ENCODE measurements at regions of chr7 and their contacts with region 1.

Region 1: DNA sequence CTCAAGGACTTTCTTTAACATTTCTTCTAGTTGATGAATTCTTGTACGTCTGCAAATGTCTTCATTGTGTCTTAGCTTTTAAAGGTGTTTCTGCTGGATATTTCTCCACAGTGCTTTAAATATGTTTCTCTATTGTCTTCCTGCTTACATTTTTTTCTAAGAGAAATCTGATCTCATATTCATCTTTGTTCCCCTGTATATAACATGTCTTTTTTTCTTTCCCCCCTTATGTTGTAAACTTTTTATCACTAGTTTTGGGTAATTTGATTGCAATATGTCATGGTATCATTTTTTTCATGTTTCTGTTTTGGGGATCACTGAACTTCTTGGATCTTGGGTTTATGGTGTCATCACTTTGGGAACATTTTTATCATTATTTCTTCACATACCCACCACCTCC is 7.5 kb downstream of the RBAK start:
- DNase-seq: no peak
- ATAC-seq: no peak
- H3K4me3 ChIP-seq: no peak overlapping the region
- H3K27ac ChIP-seq: no peak overlapping the region
- H3K4me1 ChIP-seq: peaks cover 0 to 4% (median 0%) of the 10 kb centered on the region in 9 donors
- H3K27me3 ChIP-seq: no peaks in the 10 kb centered on the region
- CTCF ChIP-seq: no peak

Region 2: GRCh38 chr7:5064391-5065106 is 11.4 kb after region 1 on chr7:
- intact Hi-C with region 1: loop called in 1 of 10 experiments (anchors 2 kb)
- DNase-seq: no peak
- ATAC-seq: no peak
- H3K4me3 ChIP-seq: no peak overlapping the region
- H3K27ac ChIP-seq: no peak overlapping the region
- H3K4me1 ChIP-seq: no peaks in the 10 kb centered on the region
- H3K27me3 ChIP-seq: no peaks in the 10 kb centered on the region
- CTCF ChIP-seq: no peak